IMR-90 (cell line): ENCODE measurements at regions of chr10 and their contacts with region 1.

Region 1: GRCh38 chr10:5199398-5199797 is 2.8 kb downstream of the AKR1C4 start:
- DNase-seq: no peak
- ATAC-seq: no peak
- H3K4me3 ChIP-seq: no peak overlapping the region
- H3K27ac ChIP-seq: no peak overlapping the region
- H3K4me1 ChIP-seq: no peaks in the 10 kb centered on the region
- H3K27me3 ChIP-seq: no peaks in the 10 kb centered on the region
- CTCF ChIP-seq: no peak
- POLR2A ChIP-seq: no peak
- RAD21 ChIP-seq: no peak

Region 2: GRCh38 chr10:4429571-4429970 is 769.8 kb before region 1 on chr10:
- CTCF ChIA-PET with region 1: no interaction called
- POLR2A ChIA-PET with region 1: no interaction called
- dilution Hi-C with region 1: no loop called
- in situ Hi-C with region 1: no loop called
- intact Hi-C with region 1: no loop called
- DNase-seq: no peak
- ATAC-seq: no peak
- H3K4me3 ChIP-seq: no peak overlapping the region
- H3K27ac ChIP-seq: no peak overlapping the region
- H3K4me1 ChIP-seq: peaks cover 10% of the 10 kb centered on the region
- H3K27me3 ChIP-seq: no peaks in the 10 kb centered on the region
- CTCF ChIP-seq: no peak
- POLR2A ChIP-seq: no peak
- RAD21 ChIP-seq: no peak

Region 3: GRCh38 chr10:5147255-5147980 is 52.0 kb before region 1 on chr10:
- CTCF ChIA-PET with region 1: no interaction called
- POLR2A ChIA-PET with region 1: no interaction called
- dilution Hi-C with region 1: no loop called
- in situ Hi-C with region 1: no loop called
- intact Hi-C with region 1: loop called (anchors 10 kb)
- DNase-seq: no peak
- ATAC-seq: no peak
- H3K4me3 ChIP-seq: no peak overlapping the region
- H3K27ac ChIP-seq: no peak overlapping the region
- H3K4me1 ChIP-seq: no peaks in the 10 kb centered on the region
- H3K27me3 ChIP-seq: no peaks in the 10 kb centered on the region
- CTCF ChIP-seq: no peak
- POLR2A ChIP-seq: no peak
- RAD21 ChIP-seq: no peak